ENCODE measurements at regions of chr9 and their contacts with region 1.

Region 1: GRCh38 chr9:124708633-124709291 is 62.3 kb downstream of the NR6A1 start:
- DNase-seq: peak; percentile 32
- H3K4me3 ChIP-seq: no peak overlapping the region
- H3K27ac ChIP-seq: peak overlapping the region; percentile 72 to 79 (median 74)
- H3K4me1 ChIP-seq: peaks cover 6 to 31% (median 21%) of the 10 kb centered on the region in 4 donors
- H3K27me3 ChIP-seq: no peaks in the 10 kb centered on the region
- CTCF ChIP-seq: no peak
- EP300 ChIP-seq: no peak
- POLR2A ChIP-seq: no peak

Region 2: DNA sequence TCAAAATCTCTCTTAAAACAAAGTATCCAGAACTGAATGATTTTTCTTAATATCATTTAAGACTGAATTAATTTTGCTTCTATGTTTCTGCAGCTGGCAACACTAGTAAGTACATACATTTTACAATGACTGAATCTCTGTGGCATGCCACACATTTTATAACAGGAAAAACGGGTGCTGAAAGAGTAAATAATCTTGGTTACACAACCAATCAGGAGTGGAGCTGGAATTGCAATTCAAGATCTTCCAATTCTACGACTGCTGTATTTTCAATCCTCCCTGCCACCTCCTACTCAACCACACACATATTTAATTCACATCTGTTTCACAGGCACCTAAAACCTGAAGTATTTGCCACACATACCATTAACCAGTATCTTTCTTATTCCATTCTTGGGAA is 148.9 kb before region 1 on chr9:
- in situ Hi-C with region 1: no loop called
- intact Hi-C with region 1: loop called (anchors 5 kb)
- DNase-seq: no peak
- H3K4me3 ChIP-seq: no peak overlapping the region
- H3K27ac ChIP-seq: no peak overlapping the region
- H3K4me1 ChIP-seq: peaks cover under 1 to 12% (median 5%) of the 10 kb centered on the region in 4 donors
- H3K27me3 ChIP-seq: no peaks in the 10 kb centered on the region
- CTCF ChIP-seq: no peak
- EP300 ChIP-seq: no peak
- POLR2A ChIP-seq: no peak

Region 3: DNA sequence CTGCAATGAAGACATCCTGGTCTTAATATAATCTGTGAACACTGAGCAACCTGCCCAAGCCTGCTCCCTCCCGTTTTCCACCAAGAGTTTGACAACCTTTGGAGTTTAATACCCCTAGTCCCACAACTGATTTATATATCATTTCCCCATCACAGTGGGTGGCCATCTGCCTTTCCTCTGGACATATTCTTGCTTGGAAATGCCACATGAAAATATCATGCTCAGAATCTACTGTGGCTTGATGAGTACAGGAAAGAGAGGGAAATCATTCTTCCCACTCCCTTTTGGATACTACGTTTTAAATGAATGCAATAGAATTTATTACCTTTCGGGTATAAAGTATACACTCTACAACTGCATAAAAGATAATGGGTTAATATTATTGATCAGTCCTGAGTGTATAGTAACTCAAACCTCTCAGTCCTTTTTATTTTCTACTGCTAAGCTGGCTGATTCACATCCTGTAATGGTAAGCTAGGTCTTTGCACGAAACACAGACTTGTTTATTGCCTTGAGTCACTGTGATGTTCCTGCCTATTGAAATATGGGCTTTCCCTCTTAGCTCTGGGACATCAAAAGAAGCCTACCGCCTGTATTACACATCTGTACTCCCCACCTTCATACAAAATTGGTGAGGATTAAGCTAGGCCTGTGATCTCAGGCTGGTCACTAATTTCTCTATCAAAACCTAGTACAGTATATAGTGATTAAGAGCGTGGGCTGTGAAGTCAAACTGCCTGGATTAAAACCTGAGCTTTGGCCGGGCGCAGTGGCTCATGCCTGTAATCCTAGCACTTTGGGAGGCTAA is 134.0 kb before region 1 on chr9:
- in situ Hi-C with region 1: no loop called
- intact Hi-C with region 1: no loop called
- DNase-seq: no peak
- H3K4me3 ChIP-seq: no peak overlapping the region
- H3K27ac ChIP-seq: no peak overlapping the region
- H3K4me1 ChIP-seq: peaks cover 0 to 8% (median 0%) of the 10 kb centered on the region in 4 donors
- H3K27me3 ChIP-seq: no peaks in the 10 kb centered on the region
- CTCF ChIP-seq: no peak
- EP300 ChIP-seq: no peak
- POLR2A ChIP-seq: no peak

Region 4: DNA sequence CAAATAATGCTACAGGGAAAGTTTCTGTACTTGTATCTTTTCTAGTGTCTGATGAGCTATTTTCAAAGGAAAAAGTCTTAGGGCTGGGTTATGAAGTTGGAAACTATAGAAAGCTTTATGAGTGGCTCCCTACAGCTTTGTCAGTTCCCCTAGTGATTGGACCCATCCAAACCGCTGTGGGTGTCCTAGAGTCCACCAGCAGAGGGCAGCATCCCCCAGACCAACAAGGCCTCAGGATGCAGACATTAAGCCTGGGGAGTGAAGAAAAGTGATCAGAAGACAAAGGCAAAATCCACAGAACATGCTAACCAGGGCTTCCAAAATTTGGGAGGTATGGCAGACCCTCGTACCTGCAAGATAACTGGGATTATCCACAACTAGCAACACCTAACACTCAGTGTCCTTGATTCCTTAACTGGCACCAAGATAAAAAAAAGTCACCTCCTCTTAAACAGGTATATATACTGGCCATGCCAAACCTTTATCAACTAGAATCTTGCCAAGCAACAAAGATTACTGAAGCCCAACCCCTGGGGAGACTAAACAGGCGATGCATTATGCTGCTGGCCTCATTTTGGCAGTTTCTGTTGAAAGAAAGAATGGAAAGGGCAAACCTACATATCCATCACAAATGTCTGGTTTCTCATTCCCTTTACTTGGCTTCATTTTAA is 91.2 kb before region 1 on chr9:
- in situ Hi-C with region 1: loop called (anchors 5 to 10 kb)
- intact Hi-C with region 1: loop called (anchors 1 kb)
- DNase-seq: peak; percentile 83
- H3K4me3 ChIP-seq: no peak overlapping the region
- H3K27ac ChIP-seq: no peak overlapping the region
- H3K4me1 ChIP-seq: peaks cover 0 to 7% (median 3%) of the 10 kb centered on the region in 4 donors
- H3K27me3 ChIP-seq: no peaks in the 10 kb centered on the region
- CTCF ChIP-seq: peak; percentile 82 to 89 (median 87)
- EP300 ChIP-seq: no peak
- POLR2A ChIP-seq: no peak

Measured in transverse colon (tissue), 4 donors.